Activated CD4-positive, alpha-beta T cell treated with anti-CD3 and anti-CD28 coated beads for 36 hours (primary cell): ENCODE measurements at regions of chr14 and their contacts with region 1.

Region 1: DNA sequence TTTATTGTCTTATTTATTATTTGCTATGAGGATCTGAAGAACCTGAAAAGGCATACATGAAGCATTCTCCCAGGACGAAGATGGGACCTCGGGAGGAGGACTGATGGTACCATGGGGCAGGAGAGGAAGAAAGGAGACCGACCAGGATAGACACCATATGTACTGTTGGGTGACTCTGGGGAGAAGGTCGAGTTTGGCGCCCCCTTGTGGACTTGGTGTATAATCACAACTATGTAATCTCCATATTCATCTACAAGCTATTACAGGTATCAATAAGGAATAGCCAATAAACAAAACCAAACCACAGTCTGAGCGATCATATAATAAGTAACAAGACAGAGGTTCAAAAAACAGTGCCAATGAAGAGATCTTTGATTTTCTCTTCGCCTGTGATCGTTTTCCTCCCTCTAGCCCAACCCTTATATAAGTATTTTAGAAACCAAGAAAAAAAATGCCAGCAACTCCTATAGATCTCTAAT is 139.1 kb downstream of the SPTSSA start:
- DNase-seq: peak; percentile 87
- ATAC-seq: peak; percentile 85
- H3K4me3 Mint-ChIP-seq: no peak overlapping the region
- H3K27ac Mint-ChIP-seq: no peak overlapping the region
- H3K4me1 Mint-ChIP-seq: no peaks in the 10 kb centered on the region
- H3K27me3 Mint-ChIP-seq: no peaks in the 10 kb centered on the region

Region 2: GRCh38 chr14:32576088-32576795 is 1746.7 kb before region 1 on chr14:
- CTCF ChIA-PET with region 1: interaction called, 3 read pairs
- POLR2A ChIA-PET with region 1: no interaction called
- intact Hi-C with region 1: loop called in 1 of 2 experiments (anchors 1 kb)
- DNase-seq: peak; percentile 46
- ATAC-seq: no peak
- H3K4me3 Mint-ChIP-seq: no peak overlapping the region
- H3K27ac Mint-ChIP-seq: no peak overlapping the region
- H3K4me1 Mint-ChIP-seq: no peaks in the 10 kb centered on the region
- H3K27me3 Mint-ChIP-seq: peaks cover 12% of the 10 kb centered on the region

Region 3: GRCh38 chr14:33475623-33476022 is 847.4 kb before region 1 on chr14:
- CTCF ChIA-PET with region 1: no interaction called
- POLR2A ChIA-PET with region 1: no interaction called
- intact Hi-C with region 1: loop called in 1 of 2 experiments (anchors 2 kb)
- DNase-seq: peak; percentile 37
- ATAC-seq: no peak
- H3K4me3 Mint-ChIP-seq: no peak overlapping the region
- H3K27ac Mint-ChIP-seq: no peak overlapping the region
- H3K4me1 Mint-ChIP-seq: no peaks in the 10 kb centered on the region
- H3K27me3 Mint-ChIP-seq: peaks cover 6% of the 10 kb centered on the region

Region 4: DNA sequence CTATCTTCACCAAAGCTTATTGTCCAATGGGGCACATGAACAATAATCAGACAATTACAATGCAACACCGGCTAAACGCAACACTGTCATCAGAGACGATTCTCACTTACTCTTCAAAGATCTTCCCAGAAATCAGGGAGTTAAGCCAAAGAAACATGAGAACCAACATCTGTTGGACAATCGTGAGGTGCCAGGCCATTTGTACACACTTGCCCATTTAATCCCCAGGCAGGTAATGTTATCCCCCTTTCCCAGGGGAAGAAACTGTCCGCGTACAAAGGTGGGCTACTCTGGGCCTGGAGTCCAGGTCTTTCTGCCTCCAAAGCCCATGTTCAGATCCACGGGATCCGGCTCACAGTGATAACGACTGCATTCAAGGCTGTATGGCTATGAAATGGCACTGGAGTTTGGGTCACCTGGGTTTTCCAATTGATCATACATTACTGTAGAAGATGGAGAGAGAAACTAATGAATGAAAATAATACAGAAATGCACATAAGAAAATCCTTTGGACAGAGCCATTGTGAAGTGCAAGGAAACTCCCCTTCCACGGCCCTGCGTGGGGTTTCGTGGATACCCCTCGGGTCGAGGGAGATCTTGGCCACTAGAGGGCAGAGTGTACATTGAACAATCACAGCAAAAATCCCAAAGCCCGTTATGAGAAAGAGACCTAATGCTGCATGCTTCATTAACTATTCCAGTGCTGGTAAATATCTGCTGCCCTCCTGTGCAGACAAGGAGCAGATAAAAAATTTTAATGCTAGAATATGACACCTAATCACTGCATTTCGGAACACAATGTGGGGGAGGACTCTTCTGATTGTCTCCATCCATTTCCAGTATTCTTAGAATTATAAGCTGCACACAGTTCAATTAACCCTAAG is 483.5 kb before region 1 on chr14:
- CTCF ChIA-PET with region 1: interaction called, 5 read pairs
- POLR2A ChIA-PET with region 1: no interaction called
- intact Hi-C with region 1: loop called (anchors 1 kb)
- DNase-seq: peak; percentile 68
- ATAC-seq: peak; percentile 53
- H3K4me3 Mint-ChIP-seq: no peak overlapping the region
- H3K27ac Mint-ChIP-seq: no peak overlapping the region
- H3K4me1 Mint-ChIP-seq: no peaks in the 10 kb centered on the region
- H3K27me3 Mint-ChIP-seq: no peaks in the 10 kb centered on the region

Region 5: DNA sequence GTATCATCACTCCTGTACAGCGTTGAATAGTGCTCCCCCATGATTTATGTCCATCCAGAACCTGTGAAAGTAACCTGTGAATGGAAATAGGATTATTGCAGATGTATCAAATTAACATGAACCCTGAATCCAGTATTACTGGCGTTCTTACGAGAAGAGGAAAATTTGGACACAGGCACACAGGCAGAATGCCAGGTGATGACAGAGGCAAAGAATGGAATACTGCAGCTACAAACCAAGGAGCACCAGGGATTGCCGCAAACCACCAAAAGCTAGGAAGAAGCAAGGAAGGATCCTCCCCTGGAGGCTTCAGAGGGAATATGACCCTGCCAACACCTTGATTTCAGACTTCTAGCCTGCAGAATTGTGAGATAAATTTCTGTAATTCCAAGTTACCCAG is 258.6 kb before region 1 on chr14:
- CTCF ChIA-PET with region 1: no interaction called
- POLR2A ChIA-PET with region 1: no interaction called
- intact Hi-C with region 1: no loop called
- DNase-seq: no peak
- ATAC-seq: no peak
- H3K4me3 Mint-ChIP-seq: no peak overlapping the region
- H3K27ac Mint-ChIP-seq: no peak overlapping the region
- H3K4me1 Mint-ChIP-seq: peaks cover 9% of the 10 kb centered on the region
- H3K27me3 Mint-ChIP-seq: peaks cover 14% of the 10 kb centered on the region

Region 6: DNA sequence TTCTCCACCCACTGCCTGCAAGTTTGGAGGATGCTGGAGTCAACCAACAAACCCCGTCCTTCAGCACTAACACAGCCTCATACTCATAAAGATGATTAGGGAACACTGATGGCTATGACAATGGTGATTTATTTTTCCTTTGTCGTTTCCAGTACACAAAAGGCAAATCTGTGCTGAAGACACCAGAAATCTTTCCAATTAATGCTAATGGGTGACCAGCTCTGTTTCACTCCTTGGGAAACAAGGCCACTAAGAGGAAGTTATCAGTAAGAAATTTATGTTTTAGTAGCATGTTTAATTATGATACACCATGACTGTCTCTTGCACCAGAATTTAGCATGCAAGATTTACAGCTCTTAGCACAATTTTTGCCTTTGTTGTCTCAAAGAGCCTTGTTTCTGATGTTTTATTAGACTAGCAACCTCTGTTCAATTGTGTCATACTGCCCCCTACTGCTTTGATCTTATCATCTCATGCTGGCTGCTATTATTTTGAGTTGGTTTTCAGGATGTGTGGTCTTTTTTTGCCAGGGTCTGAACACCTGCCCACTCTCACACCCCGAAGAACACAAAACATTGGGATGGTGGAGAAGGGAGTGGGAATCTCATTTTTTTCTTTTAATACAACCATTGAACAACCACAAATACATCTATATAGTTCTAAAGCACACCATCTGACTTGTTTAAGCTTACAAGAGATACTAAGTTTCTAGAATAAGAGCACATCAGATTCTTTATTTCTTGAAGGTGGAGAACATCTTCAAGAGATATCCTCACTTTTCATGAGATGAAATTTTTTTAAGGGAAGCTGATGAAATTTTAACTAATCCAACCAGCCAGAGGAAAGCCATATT is 21.9 kb before region 1 on chr14:
- CTCF ChIA-PET with region 1: interaction called, 14 read pairs
- POLR2A ChIA-PET with region 1: no interaction called
- intact Hi-C with region 1: no loop called
- DNase-seq: peak; percentile 8
- ATAC-seq: peak; percentile 30
- H3K4me3 Mint-ChIP-seq: no peak overlapping the region
- H3K27ac Mint-ChIP-seq: no peak overlapping the region
- H3K4me1 Mint-ChIP-seq: no peaks in the 10 kb centered on the region
- H3K27me3 Mint-ChIP-seq: no peaks in the 10 kb centered on the region

Region 7: DNA sequence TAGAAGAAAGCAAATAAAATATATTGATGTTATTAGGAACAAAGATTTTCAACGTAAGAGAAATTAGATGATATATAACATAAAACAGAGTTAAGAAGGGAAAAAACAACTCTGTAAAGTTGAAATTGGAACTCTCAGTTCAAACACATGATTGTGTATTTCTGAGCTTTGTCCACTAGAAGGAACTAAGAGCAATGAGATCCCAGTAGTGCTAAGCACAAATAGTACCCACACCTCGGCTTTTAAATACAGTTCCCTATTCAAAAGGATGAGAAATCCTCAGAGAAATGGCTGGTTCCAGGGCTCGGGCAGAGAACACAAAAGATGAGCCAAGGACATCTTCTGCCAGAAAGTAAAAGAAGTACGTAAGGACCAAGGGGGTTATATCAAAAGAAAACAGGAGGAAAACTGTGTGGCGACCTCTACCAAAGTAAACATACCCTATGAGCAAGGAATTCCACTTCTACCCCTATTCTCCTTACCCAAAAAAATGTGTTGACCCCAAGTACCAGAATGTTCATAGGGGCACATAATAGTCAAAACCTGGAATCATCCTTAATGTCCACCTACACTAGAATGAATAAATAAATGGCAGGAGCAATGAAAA is 42.4 kb after region 1 on chr14:
- CTCF ChIA-PET with region 1: interaction called, 10 read pairs
- POLR2A ChIA-PET with region 1: no interaction called
- intact Hi-C with region 1: no loop called
- DNase-seq: no peak
- ATAC-seq: no peak
- H3K4me3 Mint-ChIP-seq: no peak overlapping the region
- H3K27ac Mint-ChIP-seq: no peak overlapping the region
- H3K4me1 Mint-ChIP-seq: peaks cover 3% of the 10 kb centered on the region
- H3K27me3 Mint-ChIP-seq: peaks cover 10% of the 10 kb centered on the region